ENCODE measurements at regions of chr15 and their contacts with region 1.

Region 1: DNA sequence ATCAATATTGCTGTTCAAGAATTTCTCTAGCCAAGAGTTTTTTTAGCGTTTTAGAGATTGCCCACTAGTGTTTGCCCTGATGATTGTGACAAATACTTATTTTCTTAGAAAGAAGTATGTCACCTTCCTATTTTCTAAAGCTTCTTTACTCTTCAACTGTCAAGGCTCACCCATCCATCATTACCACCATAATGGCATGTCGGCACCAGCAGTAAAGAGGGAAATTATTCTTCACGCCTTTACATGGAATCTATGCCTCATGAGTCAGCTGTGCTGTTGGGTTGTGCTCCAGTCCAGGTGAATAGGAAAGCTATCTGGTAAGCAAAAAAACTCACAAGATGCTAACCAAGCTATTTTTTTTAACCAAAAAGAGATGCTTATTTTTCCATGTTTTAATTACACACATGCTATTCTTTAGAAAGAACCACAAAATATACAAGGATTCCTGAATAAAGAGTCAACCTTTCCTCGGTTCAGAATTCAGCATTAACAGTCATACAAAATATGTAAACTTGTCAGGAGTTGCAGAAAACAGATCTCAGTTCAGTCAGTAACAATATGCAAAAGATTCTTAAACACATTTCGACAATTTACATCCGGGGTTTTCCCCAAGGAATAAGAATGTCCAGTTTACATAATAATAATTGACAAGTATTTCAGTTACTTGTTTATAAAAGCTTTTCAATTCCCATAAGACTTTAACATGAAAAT is 128.0 kb downstream of the ATP8B4 start:
- DNase-seq: no peak
- H3K4me3 ChIP-seq: no peak overlapping the region
- H3K27ac ChIP-seq: peak overlapping the region; percentile 64 to 89
- H3K4me1 ChIP-seq: peaks cover 6 to 36% of the 10 kb centered on the region in 2 donors
- H3K27me3 ChIP-seq: no peaks in the 10 kb centered on the region
- CTCF ChIP-seq: no peak

Region 2: GRCh38 chr15:49718234-49718633 is 272.8 kb before region 1 on chr15:
- intact Hi-C with region 1: loop called (anchors 10 kb)
- DNase-seq: no peak
- H3K4me3 ChIP-seq: peak overlapping the region; percentile 3 to 31
- H3K27ac ChIP-seq: peak overlapping the region; percentile 73 to 83
- H3K4me1 ChIP-seq: peaks cover 0 to 17% of the 10 kb centered on the region in 2 donors
- H3K27me3 ChIP-seq: no peaks in the 10 kb centered on the region
- CTCF ChIP-seq: no peak

Region 3: GRCh38 chr15:49847937-49848823 is 142.8 kb before region 1 on chr15:
- intact Hi-C with region 1: loop called (anchors 5 kb)
- DNase-seq: no peak
- H3K4me3 ChIP-seq: no peak overlapping the region
- H3K27ac ChIP-seq: peak overlapping the region; percentile 35 to 82
- H3K4me1 ChIP-seq: peaks cover 9 to 10% of the 10 kb centered on the region in 2 donors
- H3K27me3 ChIP-seq: no peaks in the 10 kb centered on the region
- CTCF ChIP-seq: no peak

Region 4: DNA sequence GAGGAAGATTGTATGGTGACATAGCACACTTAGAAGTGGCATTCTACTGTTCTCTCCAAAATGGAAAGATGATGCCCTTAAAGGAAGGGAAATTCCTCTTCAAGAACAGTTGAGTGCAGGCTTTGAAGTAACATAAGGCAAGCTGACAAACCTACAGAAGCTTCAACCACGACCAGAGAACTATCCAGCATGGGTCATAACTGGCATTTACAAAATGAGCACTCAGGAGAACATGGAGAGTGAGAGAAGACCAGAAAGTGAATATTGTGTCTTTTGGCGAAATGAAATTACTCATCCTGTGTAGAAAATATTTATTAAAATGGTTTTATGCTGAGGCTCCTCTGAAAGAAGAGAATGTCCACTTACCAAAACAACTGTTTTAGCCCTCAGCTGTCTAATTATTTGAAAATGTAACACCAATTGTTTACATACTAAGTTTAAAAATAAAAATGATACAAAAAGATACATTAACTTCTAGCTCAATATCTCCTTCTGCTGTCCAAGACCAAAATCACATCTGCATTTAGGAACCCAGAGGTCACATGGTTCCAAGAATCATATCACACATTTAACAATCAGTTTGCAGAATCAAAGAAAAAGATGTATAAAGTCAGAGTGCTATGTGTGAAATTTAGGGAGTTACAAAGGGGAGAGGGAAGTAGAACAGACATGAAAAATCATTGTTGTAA is 88.8 kb before region 1 on chr15:
- intact Hi-C with region 1: loop called (anchors 5 kb)
- DNase-seq: no peak
- H3K4me3 ChIP-seq: peak overlapping the region in 1 of 2 donors; percentile 4
- H3K27ac ChIP-seq: peak overlapping the region; percentile 83 to 84
- H3K4me1 ChIP-seq: peaks cover 5 to 12% of the 10 kb centered on the region in 2 donors
- H3K27me3 ChIP-seq: no peaks in the 10 kb centered on the region
- CTCF ChIP-seq: peak in 2 of 3 experiments; percentile 11 to 12

Region 5: GRCh38 chr15:50051803-50052419 is 60.9 kb after region 1 on chr15:
- intact Hi-C with region 1: loop called (anchors 10 kb)
- DNase-seq: peak in 1 of 2 donors; percentile 76
- H3K4me3 ChIP-seq: no peak overlapping the region
- H3K27ac ChIP-seq: no peak overlapping the region
- H3K4me1 ChIP-seq: peaks cover 0 to 11% of the 10 kb centered on the region in 2 donors
- H3K27me3 ChIP-seq: no peaks in the 10 kb centered on the region
- CTCF ChIP-seq: peak; percentile 49 to 73 (median 59)

Region 6: GRCh38 chr15:50084932-50085331 is 93.9 kb after region 1 on chr15:
- intact Hi-C with region 1: no loop called
- DNase-seq: no peak
- H3K4me3 ChIP-seq: no peak overlapping the region
- H3K27ac ChIP-seq: no peak overlapping the region
- H3K4me1 ChIP-seq: no peaks in the 10 kb centered on the region
- H3K27me3 ChIP-seq: no peaks in the 10 kb centered on the region
- CTCF ChIP-seq: no peak